GM12878 (cell line): ENCODE measurements at regions of chr1 and their contacts with region 1.

Region 1: DNA sequence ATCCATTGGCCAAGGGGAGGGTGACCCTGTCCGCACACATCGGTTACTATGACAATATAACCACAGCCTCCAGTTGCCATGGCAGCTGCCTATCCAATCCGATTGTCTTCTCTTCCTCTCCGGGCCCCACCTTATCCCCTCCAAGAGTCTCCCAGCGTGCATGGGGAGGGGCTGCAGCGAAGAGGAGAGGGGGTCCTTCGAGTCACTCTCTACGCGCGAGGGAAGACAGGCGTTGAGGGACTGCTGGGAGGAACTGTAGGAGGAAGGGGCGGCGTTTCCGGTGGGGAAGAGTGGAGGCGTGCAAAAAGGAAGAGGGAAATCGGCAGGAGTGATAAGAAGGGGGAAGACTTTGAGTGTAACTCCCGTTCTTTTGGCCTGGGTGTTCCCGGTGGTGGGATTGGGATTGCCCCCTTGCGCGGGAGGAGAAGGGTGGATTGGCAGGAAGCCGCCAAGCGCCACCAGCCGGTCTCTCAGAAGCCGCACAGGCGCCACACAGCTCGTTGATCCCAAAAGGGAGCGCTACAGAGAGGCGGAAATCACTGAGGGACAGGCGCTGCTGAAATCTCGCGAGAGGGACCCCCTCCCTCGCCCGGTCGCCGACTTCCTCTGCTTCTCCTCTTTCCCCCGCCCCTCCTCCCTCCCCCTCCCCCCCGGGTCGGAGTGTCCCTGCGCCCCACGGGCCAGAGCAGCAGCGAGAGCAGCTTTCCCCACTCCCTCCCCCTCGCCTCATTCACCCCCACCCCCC is 384 bp upstream of the SMG7 start:
- DNase-seq: peak; percentile 90
- ATAC-seq: peak; percentile 69
- H3K4me3 ChIP-seq: peak overlapping the region; percentile 87
- H3K27ac ChIP-seq: peak overlapping the region; percentile 99
- H3K4me1 ChIP-seq: peaks cover 8% of the 10 kb centered on the region
- H3K27me3 ChIP-seq: no peaks in the 10 kb centered on the region
- CTCF ChIP-seq: peak in 2 of 3 experiments; percentile 21 to 38; a peak in 3 of 6 replicates
- EP300 ChIP-seq: no peak
- POLR2A ChIP-seq: peak; percentile 56
- RAD21 ChIP-seq: no peak

Region 2: GRCh38 chr1:183023601-183024316 is 448.2 kb before region 1 on chr1:
- CTCF ChIA-PET with region 1: no interaction called
- POLR2A ChIA-PET with region 1: no interaction called
- RAD21 ChIA-PET with region 1: no interaction called
- SMC1A ChIA-PET with region 1: no interaction called
- in situ Hi-C with region 1: no loop called
- intact Hi-C with region 1: loop called (anchors 10 kb)
- DNase-seq: no peak
- ATAC-seq: peak; percentile 77
- H3K4me3 ChIP-seq: peak overlapping the region; percentile 74
- H3K27ac ChIP-seq: peak overlapping the region; percentile 5
- H3K4me1 ChIP-seq: peaks cover 20% of the 10 kb centered on the region
- H3K27me3 ChIP-seq: no peaks in the 10 kb centered on the region
- CTCF ChIP-seq: peak; percentile 64 to 76 (median 68)
- EP300 ChIP-seq: no peak
- POLR2A ChIP-seq: peak; percentile 65
- RAD21 ChIP-seq: peak; percentile 47; the same call in 1 of the 2 replicates

Region 3: DNA sequence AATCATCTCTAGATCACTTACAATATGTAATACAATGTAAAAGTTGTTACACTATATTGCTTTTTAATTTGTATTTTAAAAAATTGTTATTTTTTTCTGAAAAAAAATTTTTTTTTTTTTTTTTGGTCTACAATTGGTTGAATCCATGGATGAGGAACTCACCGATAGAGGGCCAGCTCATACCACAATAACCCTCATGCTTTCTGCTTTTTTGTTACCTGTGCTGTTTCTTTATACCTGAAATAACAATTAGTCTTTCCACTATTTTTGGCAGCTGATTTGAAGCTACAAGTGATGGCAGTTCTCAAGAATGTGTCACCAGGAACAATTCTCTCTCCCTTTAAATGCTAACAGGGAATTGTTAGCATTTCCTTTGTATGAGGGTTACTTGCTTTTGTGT is 12.3 kb after region 1 on chr1:
- CTCF ChIA-PET with region 1: interaction called, 7 read pairs
- POLR2A ChIA-PET with region 1: interaction called, 9 read pairs
- RAD21 ChIA-PET with region 1: interaction called, 5 read pairs
- SMC1A ChIA-PET with region 1: interaction called, 69 read pairs
- in situ Hi-C with region 1: no loop called
- intact Hi-C with region 1: no loop called
- DNase-seq: no peak
- ATAC-seq: no peak
- H3K4me3 ChIP-seq: no peak overlapping the region
- H3K27ac ChIP-seq: no peak overlapping the region
- H3K4me1 ChIP-seq: peaks cover 36% of the 10 kb centered on the region
- H3K27me3 ChIP-seq: no peaks in the 10 kb centered on the region
- CTCF ChIP-seq: peak in 1 of 3 experiments; percentile 19; a peak in 1 of 6 replicates
- EP300 ChIP-seq: no peak
- POLR2A ChIP-seq: no peak
- RAD21 ChIP-seq: peak; percentile 34

Region 4: DNA sequence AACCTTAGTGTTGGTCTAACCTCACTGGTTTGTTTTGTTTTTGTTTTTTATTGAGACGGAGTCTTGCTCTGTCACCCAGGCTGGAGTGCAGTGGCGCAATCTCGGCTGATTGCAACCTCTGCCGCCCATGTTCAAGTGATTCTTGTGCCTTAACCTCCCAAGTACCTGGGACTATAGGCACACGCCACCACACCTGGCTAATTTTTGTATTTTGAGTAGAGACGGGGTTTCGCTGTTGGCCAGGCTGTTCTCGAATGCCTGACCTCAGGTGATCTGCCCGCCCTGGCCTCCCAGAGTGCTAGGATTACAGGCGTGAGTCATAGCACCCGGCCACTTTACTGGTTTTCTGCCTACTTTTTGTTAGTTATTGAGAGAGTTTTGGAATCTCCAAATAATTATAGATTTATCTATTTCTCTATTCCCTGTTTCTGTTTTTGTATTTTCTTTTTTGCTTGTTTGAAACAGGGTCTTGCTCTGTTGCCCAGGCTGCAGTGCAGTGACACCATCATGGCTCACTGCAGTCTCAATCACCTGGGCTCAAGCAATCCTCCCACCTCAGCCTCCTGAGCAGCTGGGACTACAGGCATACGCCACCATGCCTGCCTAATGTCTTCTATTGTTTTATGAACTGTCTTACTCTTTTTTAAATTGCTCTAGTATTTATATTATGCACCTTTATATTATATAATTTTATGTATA is 21.8 kb after region 1 on chr1:
- CTCF ChIA-PET with region 1: interaction called, 3 read pairs
- POLR2A ChIA-PET with region 1: interaction called, 3 read pairs
- RAD21 ChIA-PET with region 1: interaction called, 5 read pairs
- SMC1A ChIA-PET with region 1: interaction called, 69 read pairs
- in situ Hi-C with region 1: no loop called
- intact Hi-C with region 1: loop called (anchors 1 kb)
- DNase-seq: no peak
- ATAC-seq: no peak; the same call in 2 of the 3 replicates
- H3K4me3 ChIP-seq: no peak overlapping the region
- H3K27ac ChIP-seq: no peak overlapping the region
- H3K4me1 ChIP-seq: peaks cover 9% of the 10 kb centered on the region
- H3K27me3 ChIP-seq: no peaks in the 10 kb centered on the region
- CTCF ChIP-seq: no peak
- EP300 ChIP-seq: no peak
- POLR2A ChIP-seq: no peak
- RAD21 ChIP-seq: no peak

Region 5: DNA sequence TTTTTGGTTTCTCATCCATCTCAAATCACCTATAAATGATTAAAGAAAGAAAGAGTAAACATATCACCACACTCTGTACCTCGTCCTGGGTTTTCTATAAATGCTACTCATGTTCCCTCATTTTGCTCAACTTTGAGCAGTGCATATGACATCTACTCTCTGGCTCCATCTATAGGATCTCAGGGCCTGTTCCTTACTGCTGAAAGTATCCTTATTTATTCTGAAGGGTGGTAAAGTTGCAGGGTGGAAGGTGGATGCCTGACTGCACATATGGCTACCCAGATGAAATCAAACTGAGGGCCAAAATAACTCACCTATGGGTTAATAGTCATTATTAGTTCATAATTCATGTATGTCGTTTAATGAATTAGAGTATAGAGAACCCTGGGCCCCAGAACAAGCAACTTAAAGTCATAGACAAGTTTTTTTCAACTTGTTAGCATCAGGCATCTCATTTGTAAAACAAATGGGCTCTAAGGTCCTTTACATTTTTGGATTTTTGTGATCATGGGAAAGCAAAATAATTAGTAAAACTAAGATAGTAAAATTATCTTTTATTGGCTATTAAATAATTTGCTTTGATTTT is 71.8 kb after region 1 on chr1:
- CTCF ChIA-PET with region 1: interaction called, 10 read pairs
- POLR2A ChIA-PET with region 1: no interaction called
- RAD21 ChIA-PET with region 1: interaction called, 3 read pairs
- SMC1A ChIA-PET with region 1: interaction called, 18 read pairs
- in situ Hi-C with region 1: no loop called
- intact Hi-C with region 1: loop called (anchors 2 kb)
- DNase-seq: peak; percentile 19
- ATAC-seq: peak; percentile 95
- H3K4me3 ChIP-seq: no peak overlapping the region
- H3K27ac ChIP-seq: no peak overlapping the region
- H3K4me1 ChIP-seq: no peaks in the 10 kb centered on the region
- H3K27me3 ChIP-seq: no peaks in the 10 kb centered on the region
- CTCF ChIP-seq: peak; percentile 65 to 66 (median 65)
- EP300 ChIP-seq: no peak
- POLR2A ChIP-seq: no peak
- RAD21 ChIP-seq: peak; percentile 71